Activated CD4-positive, alpha-beta memory T cell treated with anti-CD3 and anti-CD28 coated beads for 36 hours (primary cell): ENCODE measurements at regions of chr3 and their contacts with region 1.

Region 1: DNA sequence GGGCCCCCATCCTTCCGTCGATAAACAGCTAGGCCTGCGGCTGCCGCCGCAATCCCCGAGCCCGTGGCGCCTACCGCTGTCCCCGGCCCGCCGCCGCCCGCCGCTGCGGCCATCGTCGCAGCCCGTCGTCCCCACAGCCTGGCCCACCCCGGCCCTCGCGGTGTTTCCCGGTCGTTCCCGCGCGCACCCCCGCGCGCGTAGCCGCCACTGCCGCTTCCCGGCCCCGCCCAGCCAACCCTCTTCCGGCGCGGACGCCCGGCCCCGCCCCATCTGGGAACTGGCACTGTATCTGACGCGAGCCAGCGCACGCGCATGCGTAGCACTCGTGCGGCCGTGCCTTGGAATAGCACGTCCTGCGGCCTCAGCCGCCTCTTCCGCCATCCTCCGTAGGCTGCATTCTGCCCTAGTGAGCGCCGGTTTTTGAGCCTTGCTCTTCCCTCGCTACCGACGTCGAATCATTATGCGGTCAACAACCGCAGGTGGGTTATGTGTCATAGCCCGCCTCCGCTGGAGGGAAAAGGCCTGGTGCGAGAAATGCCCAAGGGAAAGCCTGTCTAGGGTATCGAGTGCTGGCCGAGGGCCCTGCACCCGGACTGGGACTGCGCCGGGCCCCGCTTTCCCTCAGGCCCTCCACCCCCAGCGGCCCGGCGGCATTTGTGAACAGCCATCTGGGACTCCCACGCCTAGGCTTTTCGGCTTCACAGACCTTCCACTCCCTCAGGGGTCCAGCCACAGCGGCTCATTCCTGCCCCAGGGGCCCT is at the start of gene SMARCC1:
- DNase-seq: peak; percentile 99
- H3K4me3 Mint-ChIP-seq: peak within 1 kb of the TSS; percentile 78
- H3K27ac Mint-ChIP-seq: peak within 1 kb of the TSS; percentile 95
- H3K4me1 Mint-ChIP-seq: peaks cover 15% of the 10 kb centered on the region
- H3K27me3 Mint-ChIP-seq: no peaks in the 10 kb centered on the region
- total RNA-seq, gene SMARCC1: 87.2 to 90.3 TPM

Region 2: DNA sequence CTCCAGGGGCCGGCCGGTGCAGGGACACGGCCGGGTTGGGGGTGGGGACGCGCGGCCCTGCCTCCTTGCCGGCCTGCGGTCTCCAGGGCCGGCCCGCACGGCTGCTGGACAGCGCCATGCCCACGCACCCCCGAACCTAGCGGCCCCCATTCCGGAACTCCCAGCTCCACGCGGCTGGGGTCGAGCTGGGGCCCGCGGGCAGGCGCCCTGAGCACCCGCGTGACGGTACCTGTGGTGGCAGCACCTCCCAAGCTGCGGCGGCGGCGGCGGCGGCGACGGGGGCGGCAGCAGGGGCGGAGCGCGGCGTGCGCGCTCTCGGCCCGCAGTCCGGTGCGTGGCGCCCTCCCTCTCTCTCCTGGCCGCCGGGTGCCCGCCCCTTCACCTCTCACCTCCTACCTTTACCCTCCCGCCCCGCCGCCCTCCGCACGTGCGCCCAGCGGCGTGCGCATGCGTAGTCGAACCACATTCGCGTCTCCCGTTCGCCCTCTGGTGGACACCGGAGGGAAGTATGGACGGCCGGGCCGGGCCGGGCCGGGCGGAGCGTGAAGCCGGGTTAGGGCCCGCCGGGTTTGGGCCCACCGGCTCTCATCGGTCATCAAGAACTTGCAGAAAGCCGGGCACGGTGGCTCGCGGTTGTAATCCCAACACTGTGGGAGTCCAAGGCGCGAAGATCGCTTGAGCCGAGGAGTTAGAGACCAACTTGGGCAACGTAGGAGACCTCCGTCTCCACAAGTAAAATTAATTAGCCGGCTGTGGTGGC is 306.1 kb before region 1 on chr3 and contains the start of gene SCAP:
- CTCF ChIA-PET with region 1: no interaction called
- POLR2A ChIA-PET with region 1: no interaction called
- intact Hi-C with region 1: loop called (anchors 1 kb)
- DNase-seq: peak; percentile 97
- H3K4me3 Mint-ChIP-seq: peak within 1 kb of the TSS; percentile 86
- H3K27ac Mint-ChIP-seq: peak within 1 kb of the TSS; percentile 81
- H3K4me1 Mint-ChIP-seq: peaks cover 33% of the 10 kb centered on the region
- H3K27me3 Mint-ChIP-seq: no peaks in the 10 kb centered on the region
- total RNA-seq, gene SCAP: 44.5 to 44.6 TPM

Region 3: GRCh38 chr3:47634996-47635395 is 146.9 kb before region 1 on chr3:
- CTCF ChIA-PET with region 1: no interaction called
- POLR2A ChIA-PET with region 1: no interaction called
- intact Hi-C with region 1: loop called (anchors 5 kb)
- DNase-seq: peak; percentile 14
- H3K4me3 Mint-ChIP-seq: no peak overlapping the region
- H3K27ac Mint-ChIP-seq: peak overlapping the region; percentile 52
- H3K4me1 Mint-ChIP-seq: peaks cover 12% of the 10 kb centered on the region
- H3K27me3 Mint-ChIP-seq: no peaks in the 10 kb centered on the region